Spleen (tissue), 13 donors: ENCODE measurements at regions of chr4 and their contacts with region 1.

Region 1: DNA sequence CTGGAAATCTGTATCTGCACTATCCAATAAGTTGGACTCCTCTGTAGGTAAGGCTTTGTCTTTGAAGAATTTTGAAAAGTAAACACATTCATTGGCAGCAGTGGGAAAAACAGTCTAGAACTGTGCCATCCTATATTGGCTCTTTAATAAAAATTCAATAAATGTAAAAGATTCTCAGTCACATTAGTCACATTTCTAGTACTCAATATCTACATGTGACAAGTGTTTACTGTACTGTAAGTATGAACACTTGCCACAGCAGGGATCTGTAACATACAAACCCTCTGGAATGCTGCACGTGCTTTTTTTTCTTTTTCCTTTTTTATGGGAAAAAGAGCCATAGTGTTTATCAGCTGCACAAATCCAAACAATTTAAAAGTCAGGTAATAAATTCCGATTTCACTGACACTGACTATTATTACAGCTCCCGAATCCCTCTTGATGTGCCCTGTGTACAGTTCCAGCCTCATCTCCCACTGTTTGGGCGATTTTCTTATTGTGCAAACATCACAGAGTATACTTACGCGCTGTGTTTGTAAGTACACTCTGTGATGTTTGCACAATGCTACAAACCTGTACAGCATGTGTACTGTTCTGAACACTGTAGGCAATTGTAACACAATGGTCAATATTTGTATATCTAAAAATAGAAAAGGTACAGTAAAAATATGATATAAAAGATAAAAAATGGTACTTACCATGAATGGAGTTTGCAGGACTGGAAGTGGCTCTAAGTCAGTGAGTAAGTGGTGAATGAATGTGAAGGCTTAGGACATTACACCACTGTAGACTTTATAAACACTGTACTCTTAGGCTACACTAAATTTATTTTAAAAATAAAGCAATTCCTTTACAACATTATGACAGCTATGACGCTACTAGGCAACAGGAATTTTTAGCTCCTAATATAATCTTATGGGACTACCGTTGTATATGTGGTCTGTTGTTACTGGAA is 8.7 kb downstream of the PYURF start:
- DNase-seq: no peak
- H3K4me3 ChIP-seq: no peak overlapping the region
- H3K27ac ChIP-seq: no peak overlapping the region
- H3K4me1 ChIP-seq: peaks cover 0 to 6% (median 3%) of the 10 kb centered on the region in 6 donors
- H3K27me3 ChIP-seq: no peaks in the 10 kb centered on the region
- CTCF ChIP-seq: no peak
- POLR2A ChIP-seq: no peak

Region 2: DNA sequence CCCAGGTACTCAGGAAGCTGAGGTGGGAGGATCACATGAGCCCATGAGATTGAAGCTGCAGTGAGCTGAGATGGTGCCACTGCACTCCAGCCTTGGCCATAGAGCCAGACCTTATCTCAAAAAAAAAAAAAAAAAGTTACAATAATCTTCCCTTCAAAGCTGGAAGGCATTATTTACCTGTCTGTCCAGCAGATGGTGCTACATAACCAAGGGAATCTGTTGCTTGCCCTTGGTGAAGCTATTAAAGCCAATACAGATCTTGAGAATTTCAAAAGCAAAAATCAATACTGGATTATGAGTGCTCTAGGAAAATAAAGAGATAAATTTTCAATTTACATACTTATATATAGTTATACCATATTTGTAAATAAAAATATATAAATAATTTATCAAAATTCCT is 481.5 kb before region 1 on chr4:
- intact Hi-C with region 1: loop called (anchors 5 kb)
- DNase-seq: no peak
- H3K4me3 ChIP-seq: no peak overlapping the region
- H3K27ac ChIP-seq: no peak overlapping the region
- H3K4me1 ChIP-seq: peaks cover 0 to 8% (median 0%) of the 10 kb centered on the region in 6 donors
- H3K27me3 ChIP-seq: no peaks in the 10 kb centered on the region
- CTCF ChIP-seq: peak; percentile 46 to 79 (median 67)
- POLR2A ChIP-seq: no peak

Region 3: GRCh38 chr4:88217920-88218319 is 296.9 kb before region 1 on chr4:
- intact Hi-C with region 1: loop called (anchors 2 kb)
- DNase-seq: no peak
- H3K4me3 ChIP-seq: no peak overlapping the region
- H3K27ac ChIP-seq: no peak overlapping the region
- H3K4me1 ChIP-seq: peaks cover 0 to 6% (median 4%) of the 10 kb centered on the region in 6 donors
- H3K27me3 ChIP-seq: no peaks in the 10 kb centered on the region
- CTCF ChIP-seq: no peak
- POLR2A ChIP-seq: no peak